IMR-90 (cell line): ENCODE measurements at regions of chr1 and their contacts with region 1.

Region 1: GRCh38 chr1:39491146-39491921 is at the start of gene BMP8A:
- DNase-seq: no peak
- ATAC-seq: peak; percentile 78
- H3K4me3 ChIP-seq: peak within 1 kb of the TSS; percentile 55
- H3K27ac ChIP-seq: no peak within 1 kb of the TSS
- H3K4me1 ChIP-seq: peaks cover 3% of the 10 kb centered on the region; the same call in 1 of the 2 replicates
- H3K27me3 ChIP-seq: peaks cover 28% of the 10 kb centered on the region
- CTCF ChIP-seq: no peak
- POLR2A ChIP-seq: no peak
- RAD21 ChIP-seq: no peak
- total RNA-seq, gene BMP8A: not detected in 2 replicates

Region 2: DNA sequence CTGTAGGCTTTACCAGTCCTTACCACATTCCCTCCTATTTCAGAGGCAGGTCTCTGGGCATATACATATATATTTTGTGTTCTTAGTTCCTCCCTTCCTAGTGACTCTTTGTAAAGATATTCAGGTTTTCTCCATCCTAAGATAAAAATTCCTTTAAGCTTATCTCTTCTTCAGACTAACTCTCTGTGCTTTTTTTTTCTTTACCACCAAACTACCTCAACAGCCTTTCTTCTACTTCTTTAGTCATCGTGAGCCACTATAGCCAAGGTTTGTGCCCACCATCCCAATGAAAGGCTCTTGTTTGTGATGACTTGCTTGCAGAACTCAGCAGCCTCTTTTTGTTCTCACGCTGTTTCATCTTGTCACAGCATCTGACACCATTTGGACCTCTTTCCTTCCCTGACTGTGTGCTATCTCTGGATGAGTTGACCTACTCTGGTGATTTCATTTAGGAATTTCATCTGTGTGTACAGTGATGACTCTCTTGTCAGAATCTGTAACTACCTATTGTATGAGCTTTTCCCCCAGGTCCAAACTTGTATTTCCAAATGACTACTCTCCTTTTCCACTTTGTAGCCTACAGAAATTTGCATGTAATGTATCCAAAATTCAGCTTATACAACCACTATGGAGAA is 345.9 kb before region 1 on chr1:
- CTCF ChIA-PET with region 1: no interaction called
- POLR2A ChIA-PET with region 1: no interaction called
- dilution Hi-C with region 1: no loop called
- in situ Hi-C with region 1: no loop called
- intact Hi-C with region 1: no loop called
- DNase-seq: peak; percentile 58
- ATAC-seq: no peak
- H3K4me3 ChIP-seq: no peak overlapping the region
- H3K27ac ChIP-seq: peak overlapping the region; percentile 68; the same call in 1 of the 2 replicates
- H3K4me1 ChIP-seq: peaks cover 30% of the 10 kb centered on the region
- H3K27me3 ChIP-seq: no peaks in the 10 kb centered on the region
- CTCF ChIP-seq: no peak
- POLR2A ChIP-seq: no peak
- RAD21 ChIP-seq: no peak

Region 3: GRCh38 chr1:39466413-39467107 is 24.8 kb before region 1 on chr1:
- CTCF ChIA-PET with region 1: no interaction called
- POLR2A ChIA-PET with region 1: no interaction called
- dilution Hi-C with region 1: no loop called
- in situ Hi-C with region 1: no loop called
- intact Hi-C with region 1: no loop called
- DNase-seq: no peak
- ATAC-seq: no peak
- H3K4me3 ChIP-seq: no peak overlapping the region
- H3K27ac ChIP-seq: no peak overlapping the region
- H3K4me1 ChIP-seq: peaks cover 4% of the 10 kb centered on the region
- H3K27me3 ChIP-seq: no peaks in the 10 kb centered on the region
- CTCF ChIP-seq: no peak
- POLR2A ChIP-seq: no peak
- RAD21 ChIP-seq: no peak

Region 4: DNA sequence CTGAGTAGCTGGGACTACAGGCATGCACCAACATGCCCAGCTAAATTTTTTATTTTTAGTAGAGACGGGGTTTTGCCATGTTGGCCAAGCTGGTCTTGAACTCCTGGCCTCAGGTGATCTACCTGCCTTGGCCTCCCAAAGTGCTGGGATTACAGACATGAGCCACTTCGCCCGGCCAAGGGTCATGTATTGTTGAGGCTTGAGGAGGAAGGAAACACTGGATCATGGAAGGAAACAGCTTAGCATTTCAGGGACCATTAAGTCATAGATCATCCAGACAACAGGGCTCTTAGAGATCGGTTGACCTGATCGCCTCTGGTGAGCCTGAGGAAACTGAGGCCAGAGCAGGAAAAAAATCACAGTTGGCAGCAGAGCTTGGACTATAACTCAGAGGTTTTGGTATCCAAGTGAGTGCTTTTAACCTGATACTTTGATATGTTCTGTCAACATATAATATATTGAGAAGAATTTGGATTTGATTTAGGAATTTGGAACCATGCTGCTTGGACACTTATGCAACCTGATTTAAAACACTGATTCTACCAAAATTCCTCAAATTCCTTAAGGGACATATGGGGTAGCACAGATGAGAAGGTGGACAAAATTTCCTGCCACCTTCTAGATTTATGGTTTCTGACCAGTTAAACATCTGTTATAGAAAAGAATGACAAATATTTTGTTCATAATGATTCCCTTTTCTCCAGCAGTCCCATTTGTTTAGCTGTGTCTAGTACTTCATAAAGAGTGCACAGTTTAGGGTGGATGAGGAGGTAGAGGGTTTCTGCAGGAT is 13.0 kb before region 1 on chr1:
- CTCF ChIA-PET with region 1: no interaction called
- POLR2A ChIA-PET with region 1: no interaction called
- dilution Hi-C with region 1: no loop called
- in situ Hi-C with region 1: no loop called
- intact Hi-C with region 1: no loop called
- DNase-seq: no peak
- ATAC-seq: 0 out of 2 replicates have a peak, but pooled peaks have one; percentile 6
- H3K4me3 ChIP-seq: no peak overlapping the region
- H3K27ac ChIP-seq: peak overlapping the region; percentile 2; the same call in 1 of the 2 replicates
- H3K4me1 ChIP-seq: no peaks in the 10 kb centered on the region; the same call in 1 of the 2 replicates
- H3K27me3 ChIP-seq: no peaks in the 10 kb centered on the region
- CTCF ChIP-seq: no peak
- POLR2A ChIP-seq: no peak
- RAD21 ChIP-seq: no peak

Region 5: DNA sequence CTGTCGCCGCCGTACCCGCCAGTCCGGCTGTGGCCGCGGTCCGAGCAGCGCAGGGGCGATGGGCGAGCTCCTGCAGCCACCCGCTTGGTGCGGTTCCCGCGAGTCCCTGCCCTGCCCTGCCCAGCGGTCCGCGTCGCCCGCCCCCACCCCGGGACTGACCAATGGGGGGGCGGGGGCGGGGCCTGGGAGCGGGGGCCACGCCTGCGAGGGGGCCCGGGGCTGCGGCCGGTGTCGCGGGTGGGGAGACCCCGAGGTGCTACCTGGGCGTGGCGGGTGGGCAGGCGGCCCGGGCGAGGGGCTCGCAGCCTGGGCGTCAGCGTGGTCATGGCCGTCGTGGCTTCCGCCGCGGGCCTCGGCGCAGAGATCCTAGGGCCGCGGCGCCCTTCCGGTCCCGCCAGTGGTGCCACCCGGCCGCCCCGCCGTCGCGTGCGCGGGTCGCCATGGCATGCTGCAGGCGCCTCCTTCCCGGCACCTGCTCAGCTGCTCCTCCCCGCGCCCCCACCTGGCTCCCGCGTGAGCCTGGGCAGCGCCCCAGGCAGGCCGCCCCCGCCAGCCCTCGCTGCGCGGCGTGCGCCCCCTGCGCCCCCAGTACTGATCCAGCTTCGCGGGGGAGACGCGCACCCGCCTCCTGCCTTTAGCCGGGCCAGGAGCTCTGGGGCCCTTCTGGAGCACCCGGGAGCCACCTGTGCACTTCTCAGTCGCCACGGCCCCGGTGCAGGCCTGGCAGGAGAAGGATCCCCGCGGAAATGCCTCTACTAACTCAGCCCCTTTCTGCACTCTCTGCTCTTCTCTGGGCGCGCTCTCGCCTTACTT is 297.6 kb after region 1 on chr1 and contains the start of gene BMP8B:
- CTCF ChIA-PET with region 1: no interaction called
- POLR2A ChIA-PET with region 1: no interaction called
- dilution Hi-C with region 1: no loop called
- in situ Hi-C with region 1: loop called (anchors 5 kb)
- intact Hi-C with region 1: no loop called
- DNase-seq: no peak
- ATAC-seq: peak; percentile 83
- H3K4me3 ChIP-seq: peak within 1 kb of the TSS; percentile 52
- H3K27ac ChIP-seq: no peak within 1 kb of the TSS
- H3K4me1 ChIP-seq: peaks cover 1% of the 10 kb centered on the region; the same call in 1 of the 2 replicates
- H3K27me3 ChIP-seq: peaks cover 57% of the 10 kb centered on the region
- CTCF ChIP-seq: no peak
- POLR2A ChIP-seq: no peak
- RAD21 ChIP-seq: no peak
- total RNA-seq, gene BMP8B: not detected in 2 replicates